OCI-LY7 (cell line): ENCODE measurements at regions of chr2 and their contacts with region 1.

Region 1: DNA sequence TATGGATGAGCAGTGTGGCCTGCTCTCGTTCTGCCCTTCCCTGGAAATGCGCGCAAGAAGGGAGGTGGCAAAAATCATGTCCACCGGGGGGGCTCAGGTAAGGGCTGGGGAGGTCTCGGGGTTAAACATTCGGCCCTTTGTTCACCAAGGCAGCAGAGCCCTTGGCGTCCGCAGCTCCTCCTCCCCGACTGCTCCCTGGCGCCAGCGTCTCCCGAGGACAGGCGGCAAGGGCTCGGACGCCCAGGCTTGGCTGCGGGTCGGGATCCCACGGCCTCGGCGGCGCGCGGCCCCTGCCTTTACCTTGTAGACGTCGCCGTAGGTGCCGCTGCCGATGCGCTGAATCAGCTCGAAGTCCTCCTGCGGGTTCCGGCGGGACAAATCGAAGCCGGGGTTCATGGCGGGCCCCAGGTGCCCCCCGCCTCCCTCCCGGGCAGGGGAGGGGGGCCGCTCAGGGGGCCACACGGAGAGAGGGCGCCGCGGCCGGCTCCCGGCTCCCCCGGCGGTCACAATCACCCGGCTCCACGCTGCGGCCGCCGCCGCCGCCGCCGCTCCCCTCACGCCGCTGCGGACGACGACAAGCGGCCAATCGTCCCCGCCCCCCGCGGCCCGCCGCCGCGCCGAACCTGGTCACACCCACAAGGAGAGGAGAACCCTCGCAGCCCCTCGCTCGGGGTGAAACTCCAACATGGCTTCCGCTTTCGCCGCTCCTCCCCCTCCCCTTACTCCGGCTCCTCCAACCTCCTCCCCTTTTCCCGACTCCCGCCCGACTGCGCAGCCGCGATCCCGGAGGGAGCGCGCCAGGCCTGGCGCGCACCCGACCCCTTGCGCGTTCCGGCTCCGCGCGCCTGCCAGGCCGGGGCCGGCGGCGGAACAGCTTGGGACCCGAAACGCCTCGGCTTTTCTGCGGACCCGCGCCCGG is at the start of gene MAP4K3:
- DNase-seq: peak; percentile 87
- H3K4me3 ChIP-seq: peak within 1 kb of the TSS; percentile 87
- H3K27ac ChIP-seq: peak within 1 kb of the TSS; percentile 61
- H3K4me1 ChIP-seq: peaks cover 32% of the 10 kb centered on the region
- CTCF ChIP-seq: no peak
- total RNA-seq, gene MAP4K3: 10.7 and 12.4 TPM in 2 replicates

Region 2: GRCh38 chr2:39469807-39470206 is 33.0 kb after region 1 on chr2:
- CTCF ChIA-PET with region 1: no interaction called
- POLR2A ChIA-PET with region 1: interaction called, 4 read pairs
- intact Hi-C with region 1: loop called (anchors 2 kb)
- DNase-seq: peak; percentile 82
- H3K4me3 ChIP-seq: peak overlapping the region; percentile 27
- H3K27ac ChIP-seq: peak overlapping the region; percentile 45
- H3K4me1 ChIP-seq: peaks cover 34% of the 10 kb centered on the region
- CTCF ChIP-seq: no peak